ENCODE measurements at regions of chr1 and their contacts with region 1.

Region 1: DNA sequence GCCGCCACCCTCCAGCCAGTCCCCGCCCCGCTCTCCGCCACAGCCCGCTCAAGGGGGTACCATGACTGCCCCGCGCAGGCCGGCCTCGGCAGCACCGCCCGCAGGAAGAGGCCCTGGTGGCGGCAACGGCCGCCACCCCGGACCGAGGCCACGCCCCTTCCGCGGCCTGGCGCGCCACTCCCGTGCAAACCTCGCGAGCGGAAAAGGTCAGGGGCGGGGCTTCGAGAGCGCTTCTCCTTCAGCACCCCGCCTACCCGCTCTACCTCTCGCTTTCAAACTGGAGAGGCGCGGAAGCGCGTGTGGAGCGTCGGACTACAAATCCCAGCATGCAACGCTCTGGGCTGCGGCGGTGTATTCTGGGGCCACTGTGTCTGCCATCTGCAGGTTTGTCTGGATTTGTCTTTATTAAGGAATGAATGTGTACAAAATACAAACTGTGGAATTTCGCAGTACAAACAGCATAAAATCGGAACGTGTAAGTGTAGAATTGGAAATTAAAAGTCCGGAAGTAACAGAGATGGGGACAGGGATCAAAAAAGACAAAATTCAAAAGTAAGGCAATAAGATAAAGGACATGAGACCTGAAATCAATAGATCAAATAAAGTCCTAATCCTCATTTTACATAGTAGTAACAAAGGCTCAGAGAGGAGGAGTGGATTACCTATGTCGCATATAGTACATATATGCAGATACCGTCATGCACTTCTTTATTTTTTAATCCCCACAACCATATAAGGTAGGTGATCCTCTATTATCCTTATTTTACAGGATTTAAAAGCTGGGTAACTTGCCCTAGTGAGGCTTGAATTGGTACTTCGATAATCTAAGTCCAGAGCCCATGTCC is 464 bp upstream of the ADSS2 start:
- DNase-seq: peak; percentile 93
- ATAC-seq: peak; percentile 96
- H3K4me3 ChIP-seq: peak overlapping the region; percentile 80
- H3K27ac ChIP-seq: no peak overlapping the region; the same call in 1 of the 2 replicates
- H3K4me1 ChIP-seq: peaks cover 4% of the 10 kb centered on the region; the same call in 1 of the 2 replicates
- H3K27me3 ChIP-seq: no peaks in the 10 kb centered on the region
- CTCF ChIP-seq: peak; percentile 42 to 54 (median 54); a peak in 4 of 6 replicates
- EP300 ChIP-seq: no peak
- POLR2A ChIP-seq: no peak
- RAD21 ChIP-seq: peak; percentile 53

Region 2: DNA sequence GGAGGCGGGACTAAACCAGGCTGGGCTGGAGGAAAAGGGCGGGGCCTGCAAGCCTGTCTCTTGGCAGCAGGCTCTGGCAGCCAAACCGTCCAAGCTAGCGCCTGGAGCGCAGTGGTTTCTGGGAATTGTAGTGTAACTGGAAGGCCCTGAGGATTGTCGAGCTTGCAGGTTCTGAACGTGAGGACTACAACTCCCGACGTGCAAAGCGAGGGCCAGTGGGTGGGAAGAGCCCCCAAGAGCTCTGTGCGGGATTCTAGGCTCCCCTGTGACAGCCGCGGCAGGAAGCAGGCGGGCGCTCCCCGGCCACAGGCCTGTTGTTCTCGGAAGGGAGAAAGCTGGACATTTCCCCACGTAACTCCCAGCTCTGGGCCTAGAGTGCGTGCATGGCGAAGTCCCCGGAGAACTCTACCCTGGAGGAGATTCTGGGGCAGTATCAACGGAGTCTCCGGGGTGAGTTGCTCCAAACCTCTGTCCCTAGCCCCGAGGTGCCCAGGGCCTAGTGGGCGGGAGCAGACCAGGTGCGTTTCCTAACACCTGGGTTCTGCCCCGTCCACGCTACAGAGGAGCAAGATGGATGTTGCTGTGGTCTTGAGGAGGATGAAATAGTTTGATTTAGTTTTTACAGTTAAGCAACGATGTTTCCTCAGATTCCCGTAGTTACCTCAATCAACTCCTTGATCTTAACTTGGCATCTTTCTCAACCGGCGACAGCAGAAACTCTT is 1196.2 kb before region 1 on chr1 and contains the start of gene SDCCAG8:
- CTCF ChIA-PET with region 1: no interaction called
- POLR2A ChIA-PET with region 1: no interaction called
- RAD21 ChIA-PET with region 1: no interaction called
- SMC1A ChIA-PET with region 1: no interaction called
- in situ Hi-C with region 1: no loop called
- intact Hi-C with region 1: loop called (anchors 5 kb)
- DNase-seq: peak; percentile 99
- ATAC-seq: peak; percentile 82
- H3K4me3 ChIP-seq: peak within 1 kb of the TSS; percentile 74
- H3K27ac ChIP-seq: peak within 1 kb of the TSS; percentile 95
- H3K4me1 ChIP-seq: peaks cover 5% of the 10 kb centered on the region; the same call in 1 of the 2 replicates
- H3K27me3 ChIP-seq: no peaks in the 10 kb centered on the region
- CTCF ChIP-seq: no peak
- EP300 ChIP-seq: no peak
- POLR2A ChIP-seq: peak; percentile 82
- RAD21 ChIP-seq: no peak
- polyA plus RNA-seq, gene SDCCAG8: 18.8 to 21.5 TPM

Region 3: DNA sequence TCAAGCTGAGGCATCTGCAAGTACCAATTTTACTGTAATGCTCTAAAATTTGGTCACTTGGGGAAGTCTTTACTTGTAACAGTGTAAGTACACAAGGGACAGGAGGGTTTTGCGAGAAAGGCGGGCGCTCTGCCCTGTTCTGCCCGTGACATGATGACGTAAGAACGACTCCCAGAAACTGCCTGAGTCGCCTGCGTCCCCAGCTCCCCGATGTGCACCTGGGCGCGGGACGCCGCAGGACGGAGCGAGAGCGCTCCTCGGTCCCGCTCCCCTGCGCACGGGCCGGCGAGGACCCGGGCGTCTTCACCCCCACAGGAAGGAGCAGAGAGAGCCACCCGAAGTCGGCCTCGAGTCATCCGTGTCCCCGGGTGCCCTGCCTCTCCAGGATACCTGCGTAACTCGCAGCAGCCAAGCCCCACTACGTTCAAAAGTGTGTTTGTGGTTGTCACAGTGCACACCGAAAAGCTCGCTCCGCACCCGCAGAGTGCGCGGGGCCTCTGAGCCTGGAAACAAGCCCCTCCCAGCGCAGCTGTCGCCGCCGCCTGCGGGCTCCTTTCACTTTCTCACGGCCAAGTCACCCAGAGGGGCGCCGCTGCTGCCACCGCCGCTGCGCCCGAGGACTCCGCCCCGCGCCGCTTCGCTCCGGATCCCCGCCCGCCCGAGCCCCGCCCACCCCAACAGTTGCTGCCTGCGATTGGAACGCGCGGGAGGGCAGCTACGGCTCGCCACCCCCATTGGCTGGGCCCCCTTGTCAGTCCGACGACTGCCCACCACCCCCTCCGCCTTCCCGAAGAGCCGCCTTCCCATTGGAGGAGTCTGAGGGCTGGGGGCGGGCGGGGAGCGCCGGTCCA is 404.3 kb before region 1 on chr1:
- CTCF ChIA-PET with region 1: no interaction called
- POLR2A ChIA-PET with region 1: no interaction called
- RAD21 ChIA-PET with region 1: no interaction called
- SMC1A ChIA-PET with region 1: no interaction called
- in situ Hi-C with region 1: no loop called
- intact Hi-C with region 1: loop called (anchors 5 kb)
- DNase-seq: peak; percentile 92
- ATAC-seq: peak; percentile 92
- H3K4me3 ChIP-seq: peak overlapping the region; percentile 75
- H3K27ac ChIP-seq: peak overlapping the region; percentile 67
- H3K4me1 ChIP-seq: peaks cover 20% of the 10 kb centered on the region
- H3K27me3 ChIP-seq: no peaks in the 10 kb centered on the region; a peak in 1 of 4 replicates
- CTCF ChIP-seq: no peak
- EP300 ChIP-seq: peak in 1 of 2 experiments; percentile 32; a peak in 1 of 4 replicates
- POLR2A ChIP-seq: peak; percentile 91
- RAD21 ChIP-seq: no peak

Region 4: GRCh38 chr1:244319283-244320132 is 132.7 kb before region 1 on chr1:
- CTCF ChIA-PET with region 1: no interaction called
- POLR2A ChIA-PET with region 1: no interaction called
- RAD21 ChIA-PET with region 1: interaction called, 3 read pairs
- SMC1A ChIA-PET with region 1: interaction called, 9 read pairs
- in situ Hi-C with region 1: no loop called
- intact Hi-C with region 1: loop called (anchors 1 kb)
- DNase-seq: peak; percentile 84
- ATAC-seq: peak; percentile 85
- H3K4me3 ChIP-seq: peak overlapping the region; percentile 20; the same call in 1 of the 2 replicates
- H3K27ac ChIP-seq: peak overlapping the region; percentile 94
- H3K4me1 ChIP-seq: peaks cover 24% of the 10 kb centered on the region
- H3K27me3 ChIP-seq: no peaks in the 10 kb centered on the region
- CTCF ChIP-seq: no peak
- EP300 ChIP-seq: peak; percentile 59 to 62; a peak in 2 of 4 replicates
- POLR2A ChIP-seq: no peak
- RAD21 ChIP-seq: no peak

Region 5: GRCh38 chr1:244494659-244495058 is 42.5 kb after region 1 on chr1:
- CTCF ChIA-PET with region 1: no interaction called
- POLR2A ChIA-PET with region 1: no interaction called
- RAD21 ChIA-PET with region 1: no interaction called
- SMC1A ChIA-PET with region 1: no interaction called
- in situ Hi-C with region 1: no loop called
- intact Hi-C with region 1: no loop called
- DNase-seq: no peak
- ATAC-seq: no peak
- H3K4me3 ChIP-seq: no peak overlapping the region
- H3K27ac ChIP-seq: no peak overlapping the region
- H3K4me1 ChIP-seq: no peaks in the 10 kb centered on the region
- H3K27me3 ChIP-seq: no peaks in the 10 kb centered on the region
- CTCF ChIP-seq: no peak
- EP300 ChIP-seq: no peak
- POLR2A ChIP-seq: no peak
- RAD21 ChIP-seq: no peak

Region 6: GRCh38 chr1:244835276-244836134 is 383.3 kb after region 1 on chr1 and contains the start of gene COX20:
- CTCF ChIA-PET with region 1: no interaction called
- POLR2A ChIA-PET with region 1: interaction called, 3 read pairs
- RAD21 ChIA-PET with region 1: no interaction called
- SMC1A ChIA-PET with region 1: no interaction called
- in situ Hi-C with region 1: no loop called
- intact Hi-C with region 1: loop called (anchors 10 kb)
- DNase-seq: peak; percentile 60
- ATAC-seq: peak; percentile 74
- H3K4me3 ChIP-seq: peak within 1 kb of the TSS; percentile 72
- H3K27ac ChIP-seq: peak within 1 kb of the TSS; percentile 99
- H3K4me1 ChIP-seq: peaks cover 6% of the 10 kb centered on the region
- H3K27me3 ChIP-seq: no peaks in the 10 kb centered on the region
- CTCF ChIP-seq: no peak
- EP300 ChIP-seq: 0 out of 4 replicates have a peak, but pooled peaks of 1 of the 2 experiments have one; percentile 3
- POLR2A ChIP-seq: peak; percentile 91
- RAD21 ChIP-seq: no peak
- polyA plus RNA-seq, gene COX20: 91.9 to 95.3 TPM

Measured in GM12878 (cell line).